GM18951 (cell line): ENCODE measurements at regions of chr7 and their contacts with region 1.

Region 1: GRCh38 chr7:87416682-87417587 is 58.5 kb downstream of the ABCB4 start:
- POLR2A ChIP-seq: no peak

Region 2: DNA sequence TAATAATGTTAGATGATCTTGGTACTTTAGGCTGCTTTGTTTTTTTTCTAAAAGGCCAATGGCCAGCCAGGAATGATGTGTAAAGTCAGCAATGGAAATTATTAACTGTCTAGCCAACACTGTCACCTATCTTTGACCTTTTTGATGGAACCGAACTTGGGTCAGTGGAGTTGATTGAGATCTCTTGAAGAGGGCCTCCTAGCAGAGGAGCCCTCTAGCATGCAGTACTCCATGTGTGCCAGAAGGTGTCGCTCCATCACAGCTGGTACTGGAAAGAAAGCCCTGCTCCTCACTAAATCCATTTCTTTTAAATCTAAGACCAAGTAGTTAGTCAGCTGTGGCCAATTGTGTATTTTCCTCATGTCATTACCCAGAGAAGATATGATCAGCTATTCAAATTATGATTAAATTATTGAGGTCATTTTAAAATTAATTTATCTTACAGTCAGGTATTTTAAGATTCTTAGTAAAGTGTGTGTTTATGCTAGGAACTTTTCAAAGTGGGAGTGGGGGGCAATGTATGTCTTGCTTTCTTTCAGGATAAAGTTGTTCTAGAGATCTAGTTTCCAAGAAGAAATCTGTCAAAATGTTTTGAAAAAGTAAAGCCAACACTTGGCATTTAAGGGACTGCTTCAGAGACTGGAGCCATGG is 104.6 kb before region 1 on chr7:
- in situ Hi-C with region 1: loop called (anchors 5 kb)
- POLR2A ChIP-seq: no peak

Region 3: GRCh38 chr7:88057655-88058054 is 640.7 kb after region 1 on chr7:
- in situ Hi-C with region 1: no loop called
- POLR2A ChIP-seq: no peak

Region 4: GRCh38 chr7:88116235-88116795 is 699.4 kb after region 1 on chr7:
- in situ Hi-C with region 1: no loop called
- POLR2A ChIP-seq: no peak